ENCODE measurements at regions of chr5 and their contacts with region 1.

Region 1: GRCh38 chr5:14739538-14739937 is 75.0 kb downstream of the OTULIN start:
- DNase-seq: peak; percentile 79
- H3K4me3 ChIP-seq: no peak overlapping the region
- H3K27ac ChIP-seq: peak overlapping the region; percentile 58
- H3K4me1 ChIP-seq: peaks cover 17% of the 10 kb centered on the region
- H3K27me3 ChIP-seq: no peaks in the 10 kb centered on the region
- CTCF ChIP-seq: no peak
- POLR2A ChIP-seq: no peak

Region 2: DNA sequence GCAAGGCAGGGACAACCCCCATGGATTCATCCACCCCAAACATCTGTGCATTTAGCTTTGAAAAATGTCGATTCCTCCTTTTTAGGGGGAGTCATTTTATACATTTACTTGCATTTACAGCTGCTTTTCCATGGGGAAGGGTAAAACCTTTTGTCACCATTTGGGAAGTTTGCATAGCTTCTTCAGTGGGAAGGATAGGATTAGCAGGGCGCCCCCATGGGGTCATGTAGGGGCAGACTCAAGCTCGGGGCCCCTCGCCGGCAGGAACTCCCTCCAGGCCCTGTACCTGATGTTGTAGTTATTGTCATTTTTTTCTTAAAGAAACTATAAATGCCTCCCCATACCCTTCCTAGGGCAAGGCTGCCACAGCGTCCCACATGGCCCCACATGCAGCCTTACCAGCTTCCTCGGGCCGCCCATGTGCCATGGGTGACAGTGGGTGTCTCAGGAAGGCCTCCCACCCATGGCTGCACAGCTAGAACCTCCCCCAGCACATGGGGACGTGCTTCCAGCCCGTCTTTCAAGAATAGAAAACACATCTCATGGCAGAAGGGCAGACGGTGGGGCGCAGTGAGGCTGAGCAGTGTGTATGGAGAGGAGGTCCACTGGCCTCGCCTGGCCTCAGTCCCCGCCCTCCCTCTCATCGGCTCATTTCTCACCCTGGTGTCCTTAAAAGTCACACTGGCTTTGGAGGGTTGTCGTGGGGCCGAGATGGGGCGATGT is 234.1 kb before region 1 on chr5:
- CTCF ChIA-PET with region 1: no interaction called
- POLR2A ChIA-PET with region 1: no interaction called
- dilution Hi-C with region 1: no loop called
- intact Hi-C with region 1: no loop called
- DNase-seq: no peak
- H3K4me3 ChIP-seq: no peak overlapping the region
- H3K27ac ChIP-seq: no peak overlapping the region
- H3K4me1 ChIP-seq: no peaks in the 10 kb centered on the region
- H3K27me3 ChIP-seq: no peaks in the 10 kb centered on the region
- CTCF ChIP-seq: peak in 1 of 2 donors; percentile 5
- POLR2A ChIP-seq: no peak

Region 3: DNA sequence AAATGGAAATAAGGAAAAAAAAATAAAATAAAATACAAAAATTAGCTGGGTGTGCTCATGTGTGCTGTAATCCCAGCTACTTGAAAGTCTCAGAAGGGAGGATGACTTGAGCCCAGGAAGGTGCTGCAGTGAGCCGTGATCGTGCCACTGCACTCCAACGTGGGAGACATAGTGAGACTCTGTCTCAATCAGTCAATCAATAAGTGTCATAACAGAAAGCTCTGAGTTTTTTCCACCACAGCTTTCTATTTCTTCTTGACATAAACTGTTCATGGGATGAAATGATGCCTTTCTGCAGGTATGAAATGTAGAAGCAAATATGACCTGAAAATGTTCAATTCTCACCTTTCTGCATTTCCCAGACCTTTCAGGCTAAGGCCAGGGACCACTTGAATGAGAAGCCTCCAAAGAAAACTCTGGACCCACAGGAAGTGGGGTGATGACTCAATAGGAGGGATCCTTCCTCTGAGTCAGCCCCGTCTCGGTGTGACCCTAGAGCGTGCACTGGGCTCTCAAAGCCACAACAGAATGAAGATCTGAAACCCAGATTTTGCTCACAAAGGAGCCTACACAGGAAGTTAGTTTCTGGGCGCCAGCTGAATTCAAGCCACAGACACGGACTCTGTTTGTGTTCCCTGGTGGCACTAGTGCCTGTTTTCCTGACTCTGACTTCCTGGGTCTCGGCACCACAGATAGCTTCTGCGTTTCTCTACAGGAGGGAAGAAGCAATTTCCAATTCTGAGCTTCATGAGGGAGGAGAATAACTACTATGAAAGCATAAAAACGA is 70.0 kb after region 1 on chr5:
- CTCF ChIA-PET with region 1: interaction called, 5 read pairs
- POLR2A ChIA-PET with region 1: no interaction called
- dilution Hi-C with region 1: no loop called
- intact Hi-C with region 1: loop called (anchors 1 kb)
- DNase-seq: peak; percentile 75
- H3K4me3 ChIP-seq: no peak overlapping the region
- H3K27ac ChIP-seq: peak overlapping the region; percentile 50
- H3K4me1 ChIP-seq: peaks cover 20% of the 10 kb centered on the region
- H3K27me3 ChIP-seq: no peaks in the 10 kb centered on the region
- CTCF ChIP-seq: no peak
- POLR2A ChIP-seq: no peak

Measured in endothelial cell of umbilical vein (primary cell).